Activated T-helper 1 cell treated with anti-CD3 and anti-CD28 coated beads, Interleukin-12 subunit alpha, Interleukin-12 subunit beta, Interleukin-2, Interleukin-4 antibody, amounts not matched to agents 30 ng/mL and 10 ng/mL and 1 ng/mL, durations not matched to agents 14 hours and 24 hours and 36 hours (primary cell): ENCODE measurements at regions of chr1 and their contacts with region 1.

Region 1: DNA sequence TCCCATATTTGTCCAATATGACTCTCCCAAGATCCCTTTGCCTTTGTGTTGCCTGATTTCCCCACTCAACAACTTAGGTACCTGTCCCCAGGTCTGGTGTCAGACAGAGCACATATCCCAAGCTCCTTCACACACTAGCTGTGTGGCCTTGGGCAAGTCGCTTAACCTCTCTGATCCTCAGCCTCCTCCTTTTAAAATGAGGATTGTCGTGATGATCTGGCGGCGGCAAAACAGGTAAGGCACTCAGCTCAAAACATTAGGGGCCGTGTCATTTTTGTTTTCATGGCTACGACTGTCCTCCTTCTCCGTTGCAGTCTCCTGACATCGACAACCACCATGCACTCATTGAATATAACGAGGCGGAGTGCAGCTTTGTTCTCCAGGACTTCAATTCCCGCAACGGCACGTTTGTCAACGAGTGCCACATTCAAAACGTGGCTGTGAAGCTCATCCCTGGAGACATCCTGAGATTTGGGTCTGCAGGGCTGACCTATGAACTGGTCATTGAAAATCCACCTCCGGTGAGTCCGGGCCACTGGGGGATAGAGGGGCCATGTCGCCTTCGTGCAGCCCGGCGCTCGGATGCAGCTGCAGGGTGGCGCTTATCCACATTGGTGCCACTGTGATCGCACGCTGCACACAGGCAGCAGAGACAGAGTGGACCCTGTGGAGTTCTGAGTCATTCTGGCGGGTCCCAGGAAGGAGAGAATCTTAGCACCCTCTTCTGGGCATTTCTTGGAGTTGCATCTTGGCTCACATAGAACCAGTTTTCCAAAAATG is 25.2 kb downstream of the FHAD1 start:
- DNase-seq: peak; percentile 12
- H3K4me3 Mint-ChIP-seq: no peak overlapping the region
- H3K27ac Mint-ChIP-seq: no peak overlapping the region
- H3K4me1 Mint-ChIP-seq: peaks cover 8% of the 10 kb centered on the region
- H3K27me3 Mint-ChIP-seq: peaks cover 23% of the 10 kb centered on the region

Region 2: DNA sequence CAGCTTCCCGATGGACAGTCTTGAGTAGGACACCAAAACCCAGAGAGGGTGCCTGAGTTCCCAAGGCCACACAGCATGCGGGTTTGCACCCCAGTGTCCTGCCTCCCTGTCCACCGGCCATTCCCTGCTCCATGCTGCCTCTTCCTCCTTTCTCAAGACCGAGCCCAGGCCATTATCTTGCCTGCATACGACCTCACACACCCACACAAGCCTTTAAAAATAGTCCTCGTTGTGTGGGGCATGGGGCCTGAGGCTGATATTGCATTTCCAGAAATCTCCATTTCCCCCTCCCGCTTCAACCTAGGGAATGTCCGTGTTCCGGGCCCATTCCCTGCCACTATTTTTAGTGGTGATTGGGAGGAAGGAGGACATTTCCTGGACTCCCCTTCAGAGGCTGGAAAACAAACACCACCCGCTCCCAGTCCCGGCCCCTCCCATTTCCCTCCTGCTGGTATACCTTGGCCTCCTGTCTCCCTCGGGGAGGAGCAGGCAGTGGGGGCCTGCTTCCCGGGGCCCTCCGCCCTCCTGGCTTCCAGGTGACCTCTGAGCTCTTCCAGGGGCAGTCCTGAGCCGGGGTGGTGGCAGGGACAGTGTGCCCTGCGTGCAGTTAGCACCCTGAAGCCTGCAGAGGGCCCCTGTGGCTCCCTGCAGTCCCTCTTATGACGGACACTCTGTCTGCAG is 251.0 kb before region 1 on chr1:
- intact Hi-C with region 1: no loop called
- DNase-seq: no peak
- H3K4me3 Mint-ChIP-seq: no peak overlapping the region
- H3K27ac Mint-ChIP-seq: no peak overlapping the region
- H3K4me1 Mint-ChIP-seq: no peaks in the 10 kb centered on the region
- H3K27me3 Mint-ChIP-seq: no peaks in the 10 kb centered on the region

Region 3: GRCh38 chr1:15206418-15207030 is 65.7 kb before region 1 on chr1:
- intact Hi-C with region 1: no loop called
- DNase-seq: no peak
- H3K4me3 Mint-ChIP-seq: no peak overlapping the region
- H3K27ac Mint-ChIP-seq: no peak overlapping the region
- H3K4me1 Mint-ChIP-seq: no peaks in the 10 kb centered on the region
- H3K27me3 Mint-ChIP-seq: peaks cover 27% of the 10 kb centered on the region

Region 4: DNA sequence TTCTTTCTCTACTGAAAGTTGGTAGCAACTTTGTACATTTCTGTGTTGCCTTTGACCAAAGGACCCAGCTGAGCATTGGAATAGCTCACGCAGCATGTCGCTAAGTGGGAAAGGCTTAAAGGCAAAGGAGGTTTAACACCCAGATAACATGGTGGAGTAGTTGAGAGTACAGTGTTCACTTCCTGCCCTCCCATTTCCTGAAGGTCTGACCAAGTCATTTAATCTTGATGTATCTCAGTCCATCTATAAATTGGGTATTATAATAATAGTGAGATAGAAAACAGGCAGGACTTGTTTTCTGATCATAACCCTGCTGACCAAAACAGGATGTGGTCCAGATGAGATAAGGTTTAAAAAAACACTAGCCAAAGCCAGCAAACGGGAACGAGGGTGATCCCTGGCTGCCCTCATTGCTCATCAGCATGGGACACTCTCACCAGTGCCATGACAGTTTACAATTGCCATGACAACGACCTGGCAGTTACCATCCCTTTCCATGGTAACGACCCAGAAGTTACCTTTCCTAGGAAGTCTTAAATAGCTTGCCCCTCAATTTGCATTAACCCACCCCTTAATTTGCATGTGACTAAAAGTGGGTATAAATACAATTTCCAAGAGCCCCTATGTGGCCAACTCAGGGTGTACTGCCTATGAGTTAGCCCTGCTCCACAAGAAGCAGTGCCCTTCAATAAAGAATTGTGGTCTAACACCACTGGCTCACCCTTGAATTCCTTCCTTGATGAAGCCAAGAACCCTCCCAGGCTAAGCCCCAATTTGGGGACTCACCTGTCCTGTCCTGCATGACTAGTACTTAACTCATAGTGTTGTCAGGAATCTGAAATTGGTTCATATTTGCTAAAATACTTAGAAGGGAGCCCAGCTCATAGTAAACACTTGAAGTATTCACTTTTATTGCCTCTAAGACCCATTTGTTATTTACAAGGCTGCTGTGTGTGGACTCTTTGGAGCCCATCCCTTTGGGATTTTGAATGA is 53.6 kb before region 1 on chr1:
- intact Hi-C with region 1: loop called (anchors 5 kb)
- DNase-seq: no peak
- H3K4me3 Mint-ChIP-seq: no peak overlapping the region
- H3K27ac Mint-ChIP-seq: no peak overlapping the region
- H3K4me1 Mint-ChIP-seq: peaks cover 5% of the 10 kb centered on the region
- H3K27me3 Mint-ChIP-seq: peaks cover 30% of the 10 kb centered on the region

Region 5: DNA sequence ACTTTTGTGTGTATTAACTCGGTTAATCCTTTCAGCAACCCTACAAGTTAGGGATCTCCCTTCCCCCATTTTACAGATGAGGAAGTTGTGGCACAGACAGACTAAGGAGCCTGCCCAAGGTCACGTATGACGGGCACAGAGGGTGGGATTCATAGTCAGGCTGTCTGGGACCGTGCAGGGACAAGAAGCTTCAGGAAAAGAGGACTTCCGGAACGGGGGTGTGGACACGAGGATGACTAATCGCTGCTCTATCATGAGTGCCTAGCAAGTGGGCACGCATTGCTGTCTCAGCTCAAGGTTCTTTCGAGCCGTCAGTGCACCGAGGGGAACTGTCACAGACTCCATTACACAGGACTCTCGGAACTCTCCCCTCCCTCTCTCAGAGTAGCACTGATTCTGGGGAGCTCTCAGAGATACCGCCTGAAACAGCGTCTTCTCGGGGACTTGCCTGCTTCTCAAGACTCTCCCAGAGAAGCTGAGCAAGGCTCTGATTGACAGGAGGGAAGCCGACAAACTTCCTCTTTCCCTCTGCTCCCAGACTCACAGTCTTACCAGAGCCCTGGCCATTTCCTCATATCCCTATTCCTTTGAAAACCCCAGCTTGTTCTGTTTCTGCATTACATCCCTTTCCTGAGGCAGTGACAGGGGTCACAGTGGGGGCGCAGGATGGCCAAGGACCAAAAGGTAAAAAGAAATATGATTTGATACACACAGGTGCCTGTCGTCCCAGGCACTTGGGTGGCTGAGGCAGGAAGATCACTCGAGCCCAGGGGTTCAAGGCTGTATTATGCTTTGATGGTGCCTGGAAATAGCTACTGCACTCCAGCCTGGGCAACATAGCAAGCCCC is 10.8 kb before region 1 on chr1:
- intact Hi-C with region 1: no loop called
- DNase-seq: no peak
- H3K4me3 Mint-ChIP-seq: peak overlapping the region; percentile 21
- H3K27ac Mint-ChIP-seq: no peak overlapping the region
- H3K4me1 Mint-ChIP-seq: peaks cover 16% of the 10 kb centered on the region
- H3K27me3 Mint-ChIP-seq: peaks cover 49% of the 10 kb centered on the region

Region 6: DNA sequence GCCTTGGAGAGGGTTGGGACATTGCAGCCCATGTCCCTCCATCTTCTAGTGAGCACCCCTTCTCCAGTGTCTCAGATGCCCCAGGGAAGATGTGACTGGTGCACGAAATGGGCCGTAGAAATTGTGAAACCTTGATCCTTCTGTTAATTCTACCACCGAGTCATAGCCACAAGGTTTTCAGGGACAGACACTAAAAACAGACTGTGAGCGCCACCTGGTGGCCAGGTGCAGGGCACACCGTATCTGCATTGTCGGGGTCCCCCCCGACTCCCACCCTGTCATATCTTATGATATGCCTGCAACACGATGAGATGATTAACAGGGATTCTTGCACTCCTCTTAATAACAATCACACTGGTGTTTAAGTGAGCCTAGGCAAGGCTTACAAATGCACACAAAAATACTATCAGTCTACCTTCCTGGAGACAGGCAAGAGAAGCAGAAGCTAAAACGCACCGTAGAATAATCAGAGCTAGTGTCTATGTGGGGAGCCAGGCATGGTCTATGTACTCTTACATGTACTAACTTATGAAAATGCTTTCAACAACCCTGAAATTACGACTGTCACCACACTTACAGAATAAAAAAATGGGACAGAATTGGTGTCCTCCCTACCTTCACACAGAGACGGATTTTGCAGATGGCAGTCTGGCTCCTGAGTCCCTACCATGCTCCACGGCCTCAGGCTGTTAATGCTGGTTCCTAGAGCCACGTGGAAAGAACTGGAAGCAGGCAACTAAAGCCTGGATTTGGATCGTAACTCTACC is 32.7 kb after region 1 on chr1:
- intact Hi-C with region 1: loop called (anchors 2 kb)
- DNase-seq: peak; percentile 36
- H3K4me3 Mint-ChIP-seq: no peak overlapping the region
- H3K27ac Mint-ChIP-seq: no peak overlapping the region
- H3K4me1 Mint-ChIP-seq: no peaks in the 10 kb centered on the region
- H3K27me3 Mint-ChIP-seq: no peaks in the 10 kb centered on the region

Region 7: DNA sequence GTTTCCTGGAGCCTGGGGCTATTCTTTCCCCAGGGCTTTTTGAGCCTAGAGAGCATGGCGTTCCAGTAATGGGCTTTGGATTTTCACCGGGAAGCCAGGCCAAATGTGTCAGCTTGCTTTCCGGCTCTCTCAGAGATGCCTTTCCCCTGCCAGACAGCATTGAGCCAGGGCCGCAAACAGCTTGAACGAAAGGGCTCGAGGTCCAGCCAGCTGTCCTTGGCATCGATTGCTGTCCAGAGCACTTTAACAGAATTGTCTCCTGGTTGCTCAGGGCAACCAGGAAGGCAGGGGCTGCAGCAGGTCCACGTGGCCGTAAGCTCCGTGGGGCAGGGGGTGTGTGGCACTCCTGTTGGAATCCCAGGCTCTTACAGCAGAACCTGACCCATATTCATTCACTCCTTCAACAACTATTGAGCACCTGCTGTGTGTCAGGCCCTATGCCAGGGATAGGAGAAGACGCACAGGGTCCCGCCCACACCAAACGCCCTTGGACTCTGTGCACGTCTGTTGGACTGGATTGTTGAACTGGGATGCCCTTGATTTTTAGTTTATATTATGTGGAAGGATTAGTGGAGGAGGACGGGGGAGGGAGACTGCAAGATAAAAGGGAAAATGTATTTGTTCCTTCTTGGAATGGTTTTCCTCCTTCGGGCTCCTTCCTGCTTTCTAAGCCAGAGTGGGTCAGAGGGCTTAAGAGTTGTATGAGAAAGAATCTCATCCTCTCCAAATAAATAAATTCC is 98.8 kb after region 1 on chr1:
- intact Hi-C with region 1: no loop called
- DNase-seq: no peak
- H3K4me3 Mint-ChIP-seq: no peak overlapping the region
- H3K27ac Mint-ChIP-seq: no peak overlapping the region
- H3K4me1 Mint-ChIP-seq: no peaks in the 10 kb centered on the region
- H3K27me3 Mint-ChIP-seq: peaks cover 21% of the 10 kb centered on the region